Heart left ventricle (tissue), 16 donors: ENCODE measurements at regions of chr6 and their contacts with region 1.

Region 1: GRCh38 chr6:152552616-152553209 is 84.4 kb downstream of the SYNE1 start:
- DNase-seq: peak; percentile 48 to 74 (median 59)
- ATAC-seq: peak; percentile 87 to 93 (median 88)
- H3K4me3 ChIP-seq: no peak overlapping the region
- H3K27ac ChIP-seq: no peak overlapping the region
- H3K4me1 ChIP-seq: peaks cover 0 to 5% (median 0%) of the 10 kb centered on the region in 12 donors
- H3K27me3 ChIP-seq: no peaks in the 10 kb centered on the region
- CTCF ChIP-seq: peak; percentile 71 to 93 (median 84)
- POLR2A ChIP-seq: no peak

Region 2: DNA sequence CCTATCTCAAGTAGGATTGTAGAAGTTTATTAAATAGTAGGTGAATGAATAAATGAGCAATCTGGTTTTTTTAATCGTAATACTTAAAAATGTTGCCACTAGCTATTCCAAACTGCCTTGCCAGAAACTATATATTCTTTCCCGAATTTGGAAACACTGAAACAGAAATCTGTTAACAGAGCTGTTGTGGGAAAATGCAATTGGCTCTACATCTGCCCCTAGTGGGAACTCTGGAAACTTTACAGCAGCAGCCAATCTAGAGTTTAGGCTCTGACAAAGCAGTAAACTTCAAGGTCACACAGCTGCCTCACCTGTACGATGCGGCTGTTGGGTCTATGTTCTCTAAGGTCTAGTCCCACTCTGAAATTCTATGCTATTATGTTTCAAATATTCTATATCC is 42.8 kb after region 1 on chr6:
- intact Hi-C with region 1: loop called in 1 of 10 experiments (anchors 5 kb)
- DNase-seq: no peak
- ATAC-seq: no peak
- H3K4me3 ChIP-seq: no peak overlapping the region
- H3K27ac ChIP-seq: no peak overlapping the region
- H3K4me1 ChIP-seq: peaks cover 0 to 42% (median 10%) of the 10 kb centered on the region in 12 donors
- H3K27me3 ChIP-seq: no peaks in the 10 kb centered on the region
- CTCF ChIP-seq: peak in 7 of 12 donors; percentile 4 to 43 (median 36)
- POLR2A ChIP-seq: no peak

Region 3: DNA sequence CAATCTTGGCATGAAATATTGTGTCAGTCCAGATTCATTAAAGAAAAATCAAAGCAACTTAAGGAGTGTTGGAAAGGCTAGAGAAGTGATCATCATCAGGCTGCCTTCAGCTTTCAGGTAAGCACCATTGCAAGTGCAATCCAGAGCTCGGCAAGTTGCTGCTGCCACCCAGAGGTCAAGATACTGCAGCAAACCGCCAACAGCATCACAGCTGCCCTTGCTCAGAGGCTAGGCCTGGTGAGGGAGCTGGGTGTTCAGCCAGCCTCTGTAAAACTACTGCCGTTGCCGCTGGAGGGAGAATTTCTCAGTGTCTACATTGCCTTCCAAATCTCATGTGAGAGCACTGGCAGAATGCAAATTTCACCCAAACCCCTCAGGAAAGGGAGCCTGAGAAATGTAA is 90.3 kb after region 1 on chr6:
- intact Hi-C with region 1: loop called (anchors 2 to 5 kb)
- DNase-seq: peak; percentile 63 to 73 (median 70)
- ATAC-seq: peak; percentile 73 to 96 (median 92)
- H3K4me3 ChIP-seq: no peak overlapping the region
- H3K27ac ChIP-seq: no peak overlapping the region
- H3K4me1 ChIP-seq: peaks cover 0 to 1% (median 0%) of the 10 kb centered on the region in 12 donors
- H3K27me3 ChIP-seq: peaks cover 0 to under 1% (median 0%) of the 10 kb centered on the region in 9 donors
- CTCF ChIP-seq: peak; percentile 44 to 80 (median 64)
- POLR2A ChIP-seq: no peak

Region 4: DNA sequence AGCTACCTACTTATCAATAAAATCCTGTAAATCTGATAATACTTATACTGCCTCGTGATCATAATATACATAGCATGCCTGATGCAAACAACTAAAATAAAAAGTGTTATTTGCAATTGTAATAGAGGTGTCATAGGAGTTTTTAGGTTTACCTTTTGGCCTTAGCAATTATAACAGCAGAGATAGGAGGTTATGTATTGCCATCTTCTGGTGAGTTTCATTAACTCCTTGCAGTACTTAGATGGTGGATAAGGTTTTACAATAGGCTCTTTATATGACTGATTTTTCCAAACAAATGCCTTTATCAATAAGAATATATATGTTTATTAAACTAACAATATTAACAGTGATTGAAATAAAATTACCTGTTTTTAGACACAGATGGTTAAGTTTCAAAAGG is 117.2 kb after region 1 on chr6:
- intact Hi-C with region 1: loop called in 1 of 10 experiments (anchors 10 kb)
- DNase-seq: no peak
- ATAC-seq: no peak
- H3K4me3 ChIP-seq: no peak overlapping the region
- H3K27ac ChIP-seq: no peak overlapping the region
- H3K4me1 ChIP-seq: peaks cover 0 to 6% (median 0%) of the 10 kb centered on the region in 12 donors
- H3K27me3 ChIP-seq: no peaks in the 10 kb centered on the region
- CTCF ChIP-seq: peak in 10 of 12 donors; percentile 7 to 60 (median 41)
- POLR2A ChIP-seq: no peak

Region 5: DNA sequence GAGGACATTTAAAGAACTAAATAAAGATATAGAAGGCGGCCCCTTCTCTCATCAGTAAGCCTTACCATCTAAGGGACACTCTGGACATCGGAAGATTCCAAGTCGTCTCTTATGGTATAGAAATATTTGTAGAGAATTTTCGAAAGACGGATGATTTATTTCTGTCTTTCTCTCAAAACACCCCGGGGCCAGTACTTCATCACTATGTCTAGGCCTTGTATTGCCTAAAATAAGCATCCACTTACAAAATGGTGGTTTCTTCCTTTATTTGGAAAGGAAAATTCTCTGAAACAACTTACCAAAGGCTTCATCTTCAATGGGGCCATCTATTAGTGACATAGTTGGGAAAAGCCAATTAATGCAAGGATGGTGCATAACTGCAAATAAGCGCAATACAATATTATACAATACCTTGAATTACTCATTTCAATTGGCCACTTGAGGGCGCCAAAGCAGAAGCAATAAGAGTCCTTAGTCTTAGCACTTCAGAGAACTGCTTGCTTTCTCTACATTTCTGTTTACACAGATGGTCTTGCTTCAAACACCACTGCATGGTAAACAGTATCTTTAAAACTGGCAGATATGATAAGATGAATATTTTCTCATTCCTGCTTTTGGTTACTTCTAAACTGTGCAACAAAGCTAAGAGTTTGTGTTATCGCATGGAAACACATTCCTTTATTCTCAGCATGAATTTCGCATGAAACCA is 311.1 kb after region 1 on chr6:
- intact Hi-C with region 1: loop called in 1 of 10 experiments (anchors 10 kb)
- DNase-seq: peak in 4 of 5 donors; percentile 35 to 66 (median 62)
- ATAC-seq: peak in 3 of 4 donors; percentile 69 to 87 (median 79)
- H3K4me3 ChIP-seq: no peak overlapping the region
- H3K27ac ChIP-seq: no peak overlapping the region
- H3K4me1 ChIP-seq: no peaks in the 10 kb centered on the region
- H3K27me3 ChIP-seq: no peaks in the 10 kb centered on the region
- CTCF ChIP-seq: peak; percentile 56 to 81 (median 68)
- POLR2A ChIP-seq: no peak

Region 6: GRCh38 chr6:152948150-152948768 is 395.5 kb after region 1 on chr6:
- intact Hi-C with region 1: loop called in 5 of 10 experiments (anchors 5 to 10 kb)
- DNase-seq: no peak
- ATAC-seq: peak in 3 of 4 donors; percentile 64 to 69 (median 65)
- H3K4me3 ChIP-seq: peak overlapping the region in 5 of 12 donors; percentile 3 to 37 (median 8)
- H3K27ac ChIP-seq: no peak overlapping the region
- H3K4me1 ChIP-seq: peaks cover 0 to 8% (median 0%) of the 10 kb centered on the region in 12 donors
- H3K27me3 ChIP-seq: peaks cover 0 to 14% (median 0%) of the 10 kb centered on the region in 9 donors
- CTCF ChIP-seq: peak; percentile 46 to 76 (median 60)
- POLR2A ChIP-seq: no peak

Region 7: DNA sequence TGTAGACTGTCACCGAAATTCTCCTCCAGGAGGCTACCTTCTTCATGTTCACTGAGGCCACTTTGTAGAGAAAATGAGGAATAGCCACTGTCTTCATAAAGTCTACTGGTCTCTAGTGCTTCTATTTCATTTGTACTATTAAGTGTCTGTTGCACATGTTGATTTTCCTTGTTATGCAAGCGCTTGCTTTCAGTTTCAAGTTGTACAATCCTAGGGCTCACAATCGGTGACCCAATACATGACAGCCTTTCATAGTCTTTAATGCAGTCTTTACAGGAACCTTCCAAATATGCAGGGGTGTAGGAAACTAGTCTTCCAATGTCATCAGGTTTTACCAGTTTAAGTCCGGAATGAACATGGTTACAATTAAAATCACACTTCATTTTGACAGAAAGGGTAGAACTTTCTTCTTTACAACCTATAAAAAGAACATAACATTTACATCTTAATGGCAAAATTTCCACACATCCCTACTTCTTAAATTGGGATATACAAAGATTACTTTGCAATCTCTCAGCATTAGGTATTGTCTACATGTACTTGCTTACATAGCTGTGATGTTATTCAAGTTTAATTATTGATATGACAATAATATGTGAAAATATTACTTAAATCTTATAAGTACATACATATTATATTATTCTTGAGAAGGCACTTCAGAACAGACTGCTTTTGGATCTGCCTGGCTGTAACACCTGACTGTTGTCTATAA is 422.6 kb after region 1 on chr6:
- intact Hi-C with region 1: no loop called
- DNase-seq: no peak
- ATAC-seq: peak in 2 of 4 donors; percentile 44 to 45
- H3K4me3 ChIP-seq: peak overlapping the region in 1 of 12 donors; percentile 18
- H3K27ac ChIP-seq: peak overlapping the region in 1 of 12 donors; percentile 70
- H3K4me1 ChIP-seq: peaks cover 0 to 36% (median 0%) of the 10 kb centered on the region in 12 donors
- H3K27me3 ChIP-seq: no peaks in the 10 kb centered on the region
- CTCF ChIP-seq: no peak
- POLR2A ChIP-seq: no peak